ENCODE measurements at regions of chr15 and their contacts with region 1.

Region 1: GRCh38 chr15:52124270-52124880 is 11.8 kb upstream of the BCL2L10 start:
- DNase-seq: no peak
- ATAC-seq: peak; percentile 21 to 51; a peak in 3 of 6 replicates
- H3K4me3 ChIP-seq: no peak overlapping the region
- H3K27ac ChIP-seq: peak overlapping the region in 1 of 2 experiments; percentile 8; a peak in 2 of 6 replicates
- H3K4me1 ChIP-seq: 0 out of 3 replicates have a peak, but pooled peaks cover 7% of the 10 kb centered on the region
- CTCF ChIP-seq: no peak
- EP300 ChIP-seq: no peak
- POLR2A ChIP-seq: no peak
- RAD21 ChIP-seq: no peak

Region 2: DNA sequence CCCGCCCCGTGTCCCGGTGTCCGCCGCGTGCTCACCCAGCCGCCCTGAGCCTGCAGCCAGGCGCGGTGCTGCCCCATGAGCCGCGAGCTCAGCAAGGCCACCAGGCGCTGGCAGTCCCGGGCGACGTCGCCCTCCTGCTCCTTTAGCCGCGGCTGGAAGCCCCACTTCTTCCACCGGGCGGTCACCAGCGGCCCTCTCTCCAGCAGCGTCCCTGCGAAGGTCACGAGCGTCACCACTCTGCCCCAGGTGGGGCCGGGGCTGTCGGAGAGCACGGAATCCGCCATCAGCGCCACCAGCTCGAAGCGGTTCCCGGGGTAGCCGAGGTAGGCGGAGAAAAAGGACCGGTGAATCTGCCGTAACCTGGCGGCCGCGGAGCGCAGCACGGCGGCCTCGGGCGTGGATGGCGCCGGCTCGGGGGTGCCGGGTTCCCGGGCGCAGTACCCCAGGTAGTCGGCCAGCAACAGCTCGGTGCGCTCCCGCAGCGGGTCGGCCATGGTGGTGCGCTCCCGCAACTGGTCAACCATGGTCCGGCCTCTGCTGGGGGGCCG is 12.1 kb before region 1 on chr15:
- CTCF ChIA-PET with region 1: interaction called, 14 read pairs
- POLR2A ChIA-PET with region 1: no interaction called
- DNase-seq: no peak
- ATAC-seq: no peak
- H3K4me3 ChIP-seq: no peak overlapping the region
- H3K27ac ChIP-seq: peak overlapping the region in 1 of 2 experiments; percentile 6; a peak in 1 of 6 replicates
- H3K4me1 ChIP-seq: peaks cover 11% of the 10 kb centered on the region
- CTCF ChIP-seq: no peak
- EP300 ChIP-seq: no peak
- POLR2A ChIP-seq: no peak
- RAD21 ChIP-seq: no peak

Measured in A549 (cell line).